HCT116 (cell line): ENCODE measurements at regions of chr20 and their contacts with region 1.

Region 1: DNA sequence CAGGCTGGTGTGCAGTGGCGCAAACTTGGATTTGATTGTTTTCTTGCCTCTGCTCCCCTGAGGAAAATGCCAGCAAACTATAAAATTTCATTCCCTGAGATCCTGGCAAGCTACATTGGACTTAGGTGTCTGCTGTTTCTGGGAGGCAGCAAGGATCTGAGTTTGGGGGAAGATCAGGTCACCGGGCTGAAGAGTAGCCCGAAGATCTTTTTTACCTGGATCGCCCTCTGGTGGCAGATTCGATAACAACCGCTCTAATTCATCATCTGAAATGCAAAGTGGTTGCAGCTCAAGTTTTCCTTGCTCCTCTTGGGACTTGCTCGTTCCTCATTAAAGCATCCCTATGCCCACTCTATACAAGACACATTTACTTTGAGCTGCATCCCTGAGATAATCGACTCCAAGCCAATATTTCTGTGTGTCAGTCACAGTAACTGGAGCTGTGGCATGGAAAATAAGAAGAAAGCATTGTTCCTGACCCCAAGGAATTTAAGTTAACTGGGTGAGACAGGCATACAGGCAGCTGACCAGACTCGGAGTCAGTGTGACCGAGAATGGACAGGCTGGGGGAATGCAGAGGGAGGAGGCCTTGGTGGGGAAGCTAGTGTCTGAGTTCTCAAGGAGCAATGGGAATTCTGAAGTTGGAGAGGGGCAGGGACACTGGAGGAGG is 131.8 kb upstream of the PROKR2 start:
- DNase-seq: peak; percentile 38
- ATAC-seq: peak; percentile 91
- H3K4me3 ChIP-seq: no peak overlapping the region
- H3K27ac ChIP-seq: no peak overlapping the region
- H3K4me1 ChIP-seq: no peaks in the 10 kb centered on the region
- H3K27me3 ChIP-seq: peaks cover 4% of the 10 kb centered on the region; the same call in 1 of the 2 replicates
- CTCF ChIP-seq: peak; percentile 65 to 71 (median 68)
- POLR2A ChIP-seq: no peak
- RAD21 ChIP-seq: peak; percentile 74

Region 2: DNA sequence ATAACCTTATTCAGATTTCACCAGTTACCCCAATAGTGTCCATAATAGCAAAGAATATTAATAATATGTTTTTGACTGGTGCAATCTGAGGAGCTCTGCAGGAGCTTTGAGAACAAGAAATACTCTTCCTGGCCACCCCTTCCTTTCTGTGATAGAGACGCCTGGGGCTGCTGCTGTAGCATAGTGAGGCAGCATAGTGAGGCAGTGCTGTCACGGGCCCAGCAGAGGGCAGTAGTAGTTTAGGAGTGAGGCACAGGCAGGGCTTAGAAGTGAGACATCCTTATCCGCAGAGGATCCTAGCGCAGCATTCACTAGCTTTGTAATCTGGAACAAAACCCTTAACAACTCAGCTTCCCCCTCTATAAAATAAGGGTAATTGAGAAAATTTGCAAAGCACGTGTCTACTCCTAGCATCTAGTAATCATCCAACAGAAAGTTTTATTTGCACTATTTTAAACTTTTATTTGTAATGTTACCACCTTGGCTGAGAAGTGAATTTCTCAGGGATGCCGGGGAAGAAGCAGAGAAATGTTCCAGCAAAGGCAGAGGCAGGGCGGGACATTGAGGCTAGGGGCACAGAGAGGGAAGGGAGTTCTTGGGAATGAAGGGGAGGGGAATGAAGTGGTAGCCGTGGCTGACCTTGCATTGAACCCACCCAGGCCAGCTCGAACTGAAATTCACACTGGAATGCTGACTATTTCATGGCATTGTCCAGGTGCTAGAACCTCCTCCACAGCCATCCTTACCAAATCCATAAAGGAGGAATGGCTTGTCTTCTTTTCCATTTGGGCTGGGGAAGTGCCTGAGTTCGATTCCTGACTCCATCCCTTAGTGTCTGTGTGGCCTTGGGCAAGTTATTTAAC is 243.0 kb before region 1 on chr20:
- CTCF ChIA-PET with region 1: interaction called, 35 read pairs
- POLR2A ChIA-PET with region 1: no interaction called
- RAD21 ChIA-PET with region 1: interaction called, 4 to 5 read pairs
- intact Hi-C with region 1: loop called (anchors 1 kb)
- DNase-seq: peak; percentile 33
- ATAC-seq: peak; percentile 100
- H3K4me3 ChIP-seq: no peak overlapping the region
- H3K27ac ChIP-seq: no peak overlapping the region
- H3K4me1 ChIP-seq: no peaks in the 10 kb centered on the region
- H3K27me3 ChIP-seq: no peaks in the 10 kb centered on the region
- CTCF ChIP-seq: peak; percentile 71 to 95 (median 92); a peak in 5 of 6 replicates
- POLR2A ChIP-seq: no peak
- RAD21 ChIP-seq: peak; percentile 80

Region 3: DNA sequence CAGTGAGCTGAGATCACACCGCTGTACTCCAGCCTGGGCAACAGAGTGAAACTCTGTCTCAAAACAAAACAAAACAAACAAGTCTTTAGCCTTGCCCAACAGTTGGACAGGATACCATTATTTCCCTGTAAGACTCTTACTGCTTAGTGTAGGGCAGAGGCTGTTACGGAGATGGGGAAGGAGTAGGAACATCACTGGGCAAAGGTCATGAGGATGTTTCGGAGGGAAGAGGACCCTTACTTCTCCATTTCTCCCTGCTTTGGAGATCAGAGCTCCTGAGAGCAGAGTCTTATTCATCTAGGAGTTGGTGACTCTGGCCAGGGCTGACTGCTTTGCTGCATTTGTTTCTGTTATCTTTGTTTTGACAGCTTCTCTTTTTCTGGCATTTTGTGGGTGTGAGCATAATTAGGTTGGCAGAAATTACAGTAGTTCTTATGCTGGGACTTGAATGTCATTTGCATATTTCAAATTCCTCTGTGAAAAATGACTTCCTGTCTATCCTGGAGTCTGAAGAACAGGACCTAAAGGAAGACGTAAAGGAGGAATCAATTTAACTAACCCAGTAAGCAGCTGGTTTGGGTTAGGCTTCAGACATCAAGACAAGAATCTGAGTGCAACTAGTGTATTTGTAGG is 232.8 kb before region 1 on chr20:
- CTCF ChIA-PET with region 1: interaction called, 10 read pairs
- POLR2A ChIA-PET with region 1: no interaction called
- RAD21 ChIA-PET with region 1: no interaction called
- intact Hi-C with region 1: loop called (anchors 5 kb)
- DNase-seq: no peak
- ATAC-seq: no peak
- H3K4me3 ChIP-seq: no peak overlapping the region
- H3K27ac ChIP-seq: no peak overlapping the region
- H3K4me1 ChIP-seq: no peaks in the 10 kb centered on the region
- H3K27me3 ChIP-seq: no peaks in the 10 kb centered on the region
- CTCF ChIP-seq: no peak
- POLR2A ChIP-seq: no peak
- RAD21 ChIP-seq: no peak

Region 4: DNA sequence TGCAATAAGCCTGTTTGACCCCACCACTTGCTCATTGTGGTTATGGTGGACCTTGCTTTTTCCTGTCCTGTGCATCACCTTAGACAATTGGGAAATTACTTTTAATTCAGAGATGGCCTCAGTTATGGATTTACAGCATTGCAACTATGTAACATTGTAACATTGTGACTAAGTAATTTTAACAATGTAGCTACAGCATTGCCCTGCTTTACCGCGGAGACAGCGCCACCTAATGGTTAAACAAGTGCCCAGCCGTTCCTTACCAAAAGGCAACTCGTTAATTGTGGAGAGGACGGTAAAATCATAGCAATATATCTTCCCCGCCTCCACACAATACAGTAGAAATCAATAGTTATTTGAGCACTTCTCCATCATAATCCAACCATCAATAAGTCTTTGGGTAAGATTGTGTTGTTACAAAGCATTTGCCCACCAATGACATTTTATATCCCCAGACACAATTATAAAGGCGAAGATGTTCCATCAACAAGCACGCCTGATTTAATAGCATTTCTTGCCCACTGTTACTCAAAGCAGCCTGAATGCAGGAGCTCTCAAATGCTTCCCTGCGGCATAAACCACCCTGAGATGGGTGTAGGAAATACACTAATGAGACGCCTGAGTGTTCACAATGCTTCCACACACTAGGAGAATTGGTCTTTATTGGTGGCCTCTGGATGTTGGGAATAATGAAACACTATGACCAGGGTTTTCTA is 225.5 kb before region 1 on chr20:
- CTCF ChIA-PET with region 1: interaction called, 15 read pairs
- POLR2A ChIA-PET with region 1: no interaction called
- RAD21 ChIA-PET with region 1: no interaction called
- intact Hi-C with region 1: loop called (anchors 5 kb)
- DNase-seq: peak; percentile 18
- ATAC-seq: peak; percentile 82
- H3K4me3 ChIP-seq: no peak overlapping the region
- H3K27ac ChIP-seq: no peak overlapping the region
- H3K4me1 ChIP-seq: no peaks in the 10 kb centered on the region
- H3K27me3 ChIP-seq: no peaks in the 10 kb centered on the region
- CTCF ChIP-seq: peak; percentile 65 to 99 (median 94)
- POLR2A ChIP-seq: no peak
- RAD21 ChIP-seq: peak; percentile 80

Region 5: GRCh38 chr20:5402903-5403531 is 45.6 kb before region 1 on chr20:
- CTCF ChIA-PET with region 1: interaction called, 28 read pairs
- POLR2A ChIA-PET with region 1: no interaction called
- RAD21 ChIA-PET with region 1: interaction called in 1 of 2 experiments, 7 read pairs
- intact Hi-C with region 1: loop called (anchors 2 kb)
- DNase-seq: no peak
- ATAC-seq: peak; percentile 99
- H3K4me3 ChIP-seq: no peak overlapping the region
- H3K27ac ChIP-seq: no peak overlapping the region
- H3K4me1 ChIP-seq: peaks cover 0 to 3% of the 10 kb centered on the region in 2 experiments; a peak in 2 of 4 replicates
- H3K27me3 ChIP-seq: 0 out of 2 replicates have a peak, but pooled peaks cover 2% of the 10 kb centered on the region
- CTCF ChIP-seq: peak; percentile 33 to 93 (median 75); a peak in 5 of 6 replicates
- POLR2A ChIP-seq: no peak
- RAD21 ChIP-seq: peak; percentile 46

Region 6: GRCh38 chr20:5469111-5469510 is 20.5 kb after region 1 on chr20:
- CTCF ChIA-PET with region 1: no interaction called
- POLR2A ChIA-PET with region 1: no interaction called
- RAD21 ChIA-PET with region 1: no interaction called
- intact Hi-C with region 1: no loop called
- DNase-seq: no peak
- ATAC-seq: no peak
- H3K4me3 ChIP-seq: no peak overlapping the region
- H3K27ac ChIP-seq: no peak overlapping the region
- H3K4me1 ChIP-seq: no peaks in the 10 kb centered on the region
- H3K27me3 ChIP-seq: 0 out of 2 replicates have a peak, but pooled peaks cover 7% of the 10 kb centered on the region
- CTCF ChIP-seq: no peak
- POLR2A ChIP-seq: no peak
- RAD21 ChIP-seq: no peak